Calu3 (cell line): ENCODE measurements at regions of chr5 and their contacts with region 1.

Region 1: GRCh38 chr5:153147891-153148623 is 342.4 kb upstream of the GRIA1 start:
- DNase-seq: peak; percentile 15
- H3K4me3 Mint-ChIP-seq: no peak overlapping the region
- H3K27ac Mint-ChIP-seq: no peak overlapping the region
- H3K4me1 Mint-ChIP-seq: no peaks in the 10 kb centered on the region
- H3K27me3 Mint-ChIP-seq: no peaks in the 10 kb centered on the region
- CTCF ChIP-seq: peak; percentile 54

Region 2: GRCh38 chr5:152532714-152533113 is 615.3 kb before region 1 on chr5:
- CTCF ChIA-PET with region 1: interaction called, 4 read pairs
- intact Hi-C with region 1: loop called (anchors 1 kb)
- DNase-seq: peak; percentile 34
- H3K4me3 Mint-ChIP-seq: no peak overlapping the region
- H3K27ac Mint-ChIP-seq: no peak overlapping the region
- H3K4me1 Mint-ChIP-seq: no peaks in the 10 kb centered on the region
- H3K27me3 Mint-ChIP-seq: peaks cover 41% of the 10 kb centered on the region
- CTCF ChIP-seq: peak; percentile 61

Region 3: DNA sequence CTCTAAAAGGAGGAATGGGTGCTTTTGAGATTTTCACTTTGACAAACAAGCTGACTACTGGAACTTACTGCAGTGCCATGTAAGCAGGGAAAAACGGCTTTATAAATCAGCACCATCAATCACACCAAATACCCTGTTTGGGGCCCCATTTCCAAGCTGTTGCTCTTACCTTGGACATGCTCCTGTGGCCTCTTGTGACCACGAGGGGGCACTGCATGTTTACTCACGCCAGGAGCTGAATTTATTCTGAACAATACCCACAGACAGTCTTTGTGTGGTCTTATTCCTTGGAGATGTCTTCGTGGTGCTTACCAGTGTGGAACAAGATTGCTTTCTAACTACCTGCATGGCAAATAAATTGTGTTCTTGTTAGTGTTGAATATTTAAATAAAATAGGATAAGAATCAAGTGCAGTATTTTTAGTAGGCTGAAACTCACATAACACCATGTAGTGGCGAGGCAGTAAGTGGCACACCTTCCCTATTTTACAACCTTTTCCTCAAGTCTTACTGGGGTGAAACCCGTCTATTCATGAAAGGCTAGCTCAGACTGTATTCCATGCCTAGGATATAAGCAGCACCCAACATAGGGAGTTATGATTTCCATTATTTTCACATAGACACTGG is 587.4 kb before region 1 on chr5:
- CTCF ChIA-PET with region 1: interaction called, 8 read pairs
- intact Hi-C with region 1: loop called (anchors 1 kb)
- DNase-seq: peak; percentile 75
- H3K4me3 Mint-ChIP-seq: no peak overlapping the region
- H3K27ac Mint-ChIP-seq: no peak overlapping the region
- H3K4me1 Mint-ChIP-seq: no peaks in the 10 kb centered on the region
- H3K27me3 Mint-ChIP-seq: peaks cover 21% of the 10 kb centered on the region
- CTCF ChIP-seq: peak; percentile 85

Region 4: GRCh38 chr5:152593407-152593932 is 554.6 kb before region 1 on chr5:
- CTCF ChIA-PET with region 1: no interaction called
- intact Hi-C with region 1: loop called (anchors 1 kb)
- DNase-seq: no peak
- H3K4me3 Mint-ChIP-seq: no peak overlapping the region
- H3K27ac Mint-ChIP-seq: no peak overlapping the region
- H3K4me1 Mint-ChIP-seq: no peaks in the 10 kb centered on the region
- H3K27me3 Mint-ChIP-seq: peaks cover 6% of the 10 kb centered on the region
- CTCF ChIP-seq: no peak

Region 5: DNA sequence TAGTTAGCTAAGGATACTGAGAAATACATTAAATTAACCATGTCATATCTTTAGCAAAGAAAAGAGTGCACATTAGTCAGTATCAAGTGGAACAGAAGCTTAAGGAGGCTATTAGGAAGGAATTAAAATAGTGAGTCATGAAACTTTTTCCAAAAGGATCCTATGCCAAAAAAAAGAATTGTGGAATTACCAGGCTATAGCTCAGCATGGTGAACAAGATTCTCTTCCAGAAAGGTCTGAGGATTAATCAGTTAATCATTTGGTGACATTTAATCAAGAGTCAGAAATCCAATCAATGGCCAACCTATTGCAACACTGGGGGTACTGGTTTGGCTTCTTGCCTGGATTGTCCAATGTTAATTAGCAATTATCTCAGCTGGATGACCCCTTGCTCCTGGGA is 498.4 kb before region 1 on chr5:
- CTCF ChIA-PET with region 1: no interaction called
- intact Hi-C with region 1: no loop called
- DNase-seq: no peak
- H3K4me3 Mint-ChIP-seq: no peak overlapping the region
- H3K27ac Mint-ChIP-seq: no peak overlapping the region
- H3K4me1 Mint-ChIP-seq: no peaks in the 10 kb centered on the region
- H3K27me3 Mint-ChIP-seq: peaks cover 18% of the 10 kb centered on the region
- CTCF ChIP-seq: no peak

Region 6: DNA sequence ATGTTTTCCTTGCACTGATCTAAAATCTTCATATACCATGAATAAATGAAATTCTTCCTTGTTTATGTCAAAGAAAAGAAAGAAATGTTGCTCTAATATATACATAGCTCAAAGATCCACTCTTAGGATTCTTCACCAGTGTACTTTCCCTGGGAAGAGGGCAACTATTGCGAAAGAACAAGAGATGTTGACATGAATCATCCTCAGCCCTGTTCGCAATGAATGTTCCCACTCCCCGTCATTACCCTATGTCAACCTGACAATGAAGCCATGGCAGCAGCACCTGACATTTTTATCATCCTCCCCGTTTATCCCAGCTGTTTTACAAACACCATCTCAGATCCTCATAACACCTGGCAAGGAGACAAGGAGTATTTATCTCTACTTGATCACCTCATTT is 66.7 kb before region 1 on chr5:
- CTCF ChIA-PET with region 1: no interaction called
- intact Hi-C with region 1: no loop called
- DNase-seq: no peak
- H3K4me3 Mint-ChIP-seq: no peak overlapping the region
- H3K27ac Mint-ChIP-seq: no peak overlapping the region
- H3K4me1 Mint-ChIP-seq: no peaks in the 10 kb centered on the region
- H3K27me3 Mint-ChIP-seq: no peaks in the 10 kb centered on the region
- CTCF ChIP-seq: no peak